GM10248 (cell line): ENCODE measurements at regions of chr17 and their contacts with region 1.

Region 1: GRCh38 chr17:3738562-3739295 is 15.0 kb downstream of the HASPIN start:
- DNase-seq: no peak
- CTCF ChIP-seq: no peak

Region 2: DNA sequence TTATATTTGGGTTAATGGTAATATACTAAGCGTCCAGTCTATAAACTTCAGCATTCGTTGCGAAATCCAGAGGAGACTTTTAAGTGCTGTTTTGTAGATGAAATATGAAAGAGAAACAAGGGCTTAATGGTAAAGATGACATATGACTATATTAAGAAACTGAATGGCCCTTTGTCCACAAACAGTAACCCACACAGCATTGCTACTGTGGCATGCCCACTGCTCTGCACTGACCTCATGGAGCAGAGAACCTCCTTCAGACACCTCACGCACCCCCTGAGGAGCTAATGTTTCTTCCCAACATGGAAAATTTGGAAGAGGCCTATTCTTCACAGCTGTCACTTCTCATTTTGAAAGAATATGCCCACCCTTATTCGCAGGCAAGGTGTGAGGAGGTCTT is 236.3 kb before region 1 on chr17:
- CTCF ChIA-PET with region 1: no interaction called
- POLR2A ChIA-PET with region 1: no interaction called
- DNase-seq: no peak
- CTCF ChIP-seq: no peak

Region 3: GRCh38 chr17:3622977-3623594 is 115.6 kb before region 1 on chr17:
- CTCF ChIA-PET with region 1: no interaction called
- POLR2A ChIA-PET with region 1: interaction called, 19 read pairs
- DNase-seq: no peak
- CTCF ChIP-seq: no peak

Region 4: GRCh38 chr17:3754458-3755334 is 16.0 kb after region 1 on chr17:
- CTCF ChIA-PET with region 1: interaction called, 111 read pairs
- POLR2A ChIA-PET with region 1: no interaction called
- DNase-seq: peak; percentile 76
- CTCF ChIP-seq: no peak

Region 5: DNA sequence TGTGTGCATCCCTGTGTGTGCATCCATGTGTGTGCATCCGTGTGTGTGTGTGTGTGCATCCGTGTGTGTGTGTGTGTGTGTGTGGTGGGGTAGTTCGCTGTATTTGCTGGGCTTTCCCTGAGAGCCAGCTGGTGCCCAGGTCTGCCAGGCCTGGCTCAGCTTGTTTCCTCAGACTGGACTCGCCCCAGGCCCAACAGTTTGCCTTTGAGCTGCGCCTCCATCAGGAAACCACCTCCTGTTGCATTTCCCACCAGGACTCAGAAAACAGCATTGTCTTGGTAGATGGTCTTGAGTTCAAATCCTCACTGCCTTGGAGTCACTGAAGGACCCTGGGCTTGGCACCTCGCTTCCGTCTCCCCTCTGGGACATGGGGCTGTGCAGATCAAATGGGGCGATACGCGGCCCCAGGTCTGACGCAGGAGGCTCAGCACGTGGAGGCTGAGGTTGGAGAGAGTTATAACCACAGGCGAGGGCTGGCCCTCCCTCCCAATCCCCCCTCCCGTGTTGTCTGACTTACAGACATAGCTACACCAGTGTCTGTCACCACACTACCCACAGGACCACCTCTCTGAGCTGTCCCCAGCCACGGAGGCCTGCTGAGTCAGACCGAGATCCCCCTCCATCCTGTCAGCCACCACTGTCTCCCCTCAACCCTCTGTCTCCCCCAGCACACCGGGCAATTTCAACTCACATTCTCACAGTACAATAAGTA is 57.5 kb after region 1 on chr17:
- CTCF ChIA-PET with region 1: interaction called, 11 read pairs
- POLR2A ChIA-PET with region 1: no interaction called
- DNase-seq: peak; percentile 87
- CTCF ChIP-seq: no peak

Region 6: GRCh38 chr17:3827124-3827773 is 88.5 kb after region 1 on chr17:
- CTCF ChIA-PET with region 1: interaction called, 217 read pairs
- POLR2A ChIA-PET with region 1: no interaction called
- DNase-seq: peak; percentile 65
- CTCF ChIP-seq: peak; percentile 68

Region 7: DNA sequence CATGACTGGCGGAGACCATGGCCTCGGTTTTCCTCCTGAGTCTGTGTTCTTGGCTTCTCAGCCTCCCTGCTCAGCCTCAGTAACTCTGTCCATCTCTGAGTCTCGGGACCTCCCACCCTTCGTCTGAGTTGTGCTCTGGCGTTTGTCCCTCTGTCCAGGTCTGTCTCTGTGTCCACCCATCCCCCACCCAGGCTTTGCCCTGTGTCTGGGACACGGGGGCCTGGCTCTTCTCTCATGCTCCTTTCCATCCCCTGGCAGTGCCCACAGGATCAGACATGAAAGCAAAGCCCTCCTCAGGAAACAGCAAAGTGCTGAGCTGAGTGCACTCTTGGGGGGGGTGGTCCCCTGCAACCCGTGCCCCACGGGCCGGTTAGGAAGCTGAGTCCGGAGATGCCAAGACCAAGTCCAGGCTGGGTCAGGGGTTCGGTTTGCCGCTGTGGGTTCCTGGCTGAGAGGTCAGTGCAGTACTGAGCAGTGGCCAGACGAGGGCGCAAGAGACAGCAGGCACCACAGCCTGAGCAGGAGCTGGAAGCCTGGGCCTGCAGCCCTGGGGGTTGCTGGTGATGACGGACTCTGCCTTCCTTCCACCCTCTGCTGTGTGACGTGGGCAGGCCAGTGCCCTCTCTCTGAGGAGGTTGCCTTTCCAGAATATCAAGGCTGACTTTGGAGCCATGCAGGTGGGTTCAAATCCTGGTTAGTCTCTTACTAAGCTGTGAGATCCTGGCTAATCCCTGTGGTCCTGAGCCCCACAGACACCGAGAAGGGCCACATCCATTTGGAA is 175.0 kb after region 1 on chr17:
- CTCF ChIA-PET with region 1: interaction called, 16 read pairs
- POLR2A ChIA-PET with region 1: no interaction called
- DNase-seq: peak; percentile 89
- CTCF ChIP-seq: peak; percentile 99